Gastrocnemius medialis (tissue), 4 donors: ENCODE measurements at regions of chr16 and their contacts with region 1.

Region 1: GRCh38 chr16:56931892-56932720 is at the start of gene HERPUD1:
- DNase-seq: peak; percentile 98 to 99
- ATAC-seq: peak; percentile 77 to 83
- H3K4me3 ChIP-seq: peak within 1 kb of the TSS; percentile 84 to 99 (median 93)
- H3K27ac ChIP-seq: peak within 1 kb of the TSS; percentile 96 to 100 (median 98)
- H3K4me1 ChIP-seq: peaks cover 30 to 38% of the 10 kb centered on the region in 2 donors
- H3K27me3 ChIP-seq: no peaks in the 10 kb centered on the region
- CTCF ChIP-seq: peak in 2 of 5 experiments; percentile 10 to 25
- POLR2A ChIP-seq: peak; percentile 95 to 100
- total RNA-seq, gene HERPUD1: 110 to 281 (median 125) TPM

Region 2: GRCh38 chr16:56519459-56520250 is 412.5 kb before region 1 on chr16 and contains the start of gene BBS2:
- in situ Hi-C with region 1: no loop called
- intact Hi-C with region 1: loop called (anchors 10 kb)
- DNase-seq: peak; percentile 79 to 85
- ATAC-seq: peak; percentile 88 to 90
- H3K4me3 ChIP-seq: peak within 1 kb of the TSS; percentile 90 to 99 (median 96)
- H3K27ac ChIP-seq: peak within 1 kb of the TSS; percentile 90 to 92 (median 91)
- H3K4me1 ChIP-seq: peaks cover 33 to 41% of the 10 kb centered on the region in 2 donors
- H3K27me3 ChIP-seq: no peaks in the 10 kb centered on the region
- CTCF ChIP-seq: peak in 1 of 5 experiments; percentile 12
- POLR2A ChIP-seq: peak; percentile 82 to 85
- total RNA-seq, gene BBS2: 25.2 to 52.0 (median 28.6) TPM

Region 3: DNA sequence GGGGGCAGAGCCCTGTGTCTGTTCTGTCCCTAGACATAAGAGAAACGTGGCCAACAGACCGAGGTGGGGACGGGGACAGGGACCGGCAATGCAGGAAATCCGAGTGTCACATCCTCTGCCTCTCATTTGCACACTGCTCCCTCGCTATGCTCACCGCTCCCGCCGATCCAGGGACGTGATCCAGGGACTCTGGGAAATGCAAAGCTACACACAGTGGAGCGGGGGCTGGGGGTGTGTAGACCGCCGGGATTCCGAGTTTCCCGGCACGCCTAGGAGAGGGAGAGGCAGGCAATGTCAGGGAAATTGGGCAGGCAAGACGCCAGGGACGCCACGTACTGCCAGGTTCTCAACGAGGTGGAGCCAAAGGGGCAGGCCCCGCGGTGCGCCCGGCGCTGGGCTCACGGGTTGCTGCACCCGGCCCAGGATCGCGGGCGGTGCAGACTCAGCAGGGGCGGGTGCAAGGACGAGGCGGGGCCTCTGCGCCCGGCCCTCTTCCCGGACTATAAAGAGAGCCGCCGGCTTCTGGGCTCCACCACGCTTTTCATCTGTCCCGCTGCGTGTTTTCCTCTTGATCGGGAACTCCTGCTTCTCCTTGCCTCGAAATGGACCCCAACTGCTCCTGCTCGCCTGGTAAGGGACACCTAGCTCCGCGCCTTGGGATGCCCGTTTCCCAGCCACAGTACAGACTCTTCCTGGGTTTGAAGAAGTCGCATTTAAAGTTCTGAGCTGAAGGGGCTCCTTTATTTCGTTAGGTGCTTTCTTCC is 250.0 kb before region 1 on chr16 and contains the start of gene MT1X:
- in situ Hi-C with region 1: no loop called
- intact Hi-C with region 1: loop called (anchors 5 kb)
- DNase-seq: peak; percentile 95 to 97
- ATAC-seq: peak; percentile 28 to 29
- H3K4me3 ChIP-seq: peak within 1 kb of the TSS; percentile 66 to 83 (median 78)
- H3K27ac ChIP-seq: peak within 1 kb of the TSS; percentile 89 to 94 (median 91)
- H3K4me1 ChIP-seq: peaks cover 45 to 46% of the 10 kb centered on the region in 2 donors
- H3K27me3 ChIP-seq: no peaks in the 10 kb centered on the region
- CTCF ChIP-seq: no peak
- POLR2A ChIP-seq: peak in 1 of 2 donors; percentile 99
- total RNA-seq, gene MT1X: 3,871 to 10,589 (median 6,239) TPM

Region 4: DNA sequence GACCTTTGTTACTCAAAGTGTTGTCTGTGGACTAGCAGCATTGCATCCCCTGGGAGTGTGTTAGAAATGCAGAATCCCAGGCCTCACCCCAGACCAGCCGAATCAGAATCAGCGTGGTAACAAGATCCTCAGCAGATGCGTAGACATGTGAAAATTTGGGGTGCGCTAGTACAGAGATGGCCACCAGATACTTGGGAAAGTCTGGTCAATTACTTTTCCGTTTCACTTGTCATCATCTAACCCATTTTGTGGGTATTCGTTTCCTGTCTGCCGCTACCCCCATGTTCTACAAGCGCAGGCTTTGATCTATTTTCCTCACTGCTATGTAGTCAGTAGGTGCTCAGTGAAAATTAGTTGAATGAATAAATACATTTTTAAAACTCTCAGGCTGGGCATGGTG is 33.3 kb before region 1 on chr16:
- in situ Hi-C with region 1: no loop called
- intact Hi-C with region 1: no loop called
- DNase-seq: no peak
- ATAC-seq: no peak
- H3K4me3 ChIP-seq: no peak overlapping the region
- H3K27ac ChIP-seq: no peak overlapping the region
- H3K4me1 ChIP-seq: no peaks in the 10 kb centered on the region
- H3K27me3 ChIP-seq: no peaks in the 10 kb centered on the region
- CTCF ChIP-seq: no peak
- POLR2A ChIP-seq: no peak

Region 5: DNA sequence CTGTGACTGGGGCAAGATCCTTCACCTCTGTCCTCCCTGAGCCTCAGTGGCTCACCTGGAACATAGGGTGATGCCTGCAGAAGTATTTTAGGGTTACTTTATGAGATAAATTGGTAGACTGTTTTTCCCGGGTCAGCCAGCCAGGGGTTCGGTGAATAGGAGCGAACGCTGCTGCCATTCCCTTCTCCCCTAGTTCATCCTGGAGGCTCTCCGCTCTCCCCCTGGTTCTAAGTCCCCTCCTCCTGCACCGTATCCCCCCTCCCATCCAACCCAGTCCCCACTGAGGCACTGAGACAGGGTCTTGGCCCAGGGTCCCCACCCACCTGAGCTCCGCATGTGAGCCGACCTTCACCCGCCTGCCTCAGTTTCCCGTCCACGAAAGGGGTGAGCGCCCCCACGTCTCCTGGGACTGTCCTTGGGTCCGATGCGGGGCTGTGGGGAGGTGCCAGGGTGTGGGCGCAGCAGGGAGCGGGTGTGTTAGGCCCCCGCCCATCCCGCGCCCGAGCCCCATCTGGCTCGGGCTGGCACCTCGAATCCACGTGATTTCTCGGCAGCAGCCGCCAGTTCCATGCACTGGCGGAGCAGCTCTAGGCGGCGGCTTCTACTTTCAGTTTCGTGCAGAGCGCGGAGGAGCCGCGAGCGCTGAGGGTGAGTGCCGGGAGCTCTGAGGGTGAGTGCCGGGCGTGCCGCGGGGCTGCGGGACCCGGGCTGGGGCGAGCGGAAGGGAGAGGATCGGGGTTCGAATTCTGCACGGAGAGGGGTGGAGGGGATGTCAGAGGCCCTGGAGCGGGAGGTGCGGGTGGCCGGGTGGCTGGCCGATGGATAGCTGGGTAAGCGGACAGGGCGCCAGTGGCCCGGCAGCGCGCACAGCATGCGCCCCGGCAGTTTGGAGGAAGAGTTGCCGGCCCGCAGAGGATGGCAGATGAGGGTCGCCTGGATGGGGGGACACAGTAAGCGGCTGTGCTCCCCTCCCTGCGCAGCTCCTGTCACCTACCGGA is 57.1 kb after region 1 on chr16 and contains the start of gene NLRC5:
- in situ Hi-C with region 1: no loop called
- intact Hi-C with region 1: loop called (anchors 5 kb)
- DNase-seq: peak; percentile 48 to 71
- ATAC-seq: peak; percentile 84 to 89
- H3K4me3 ChIP-seq: peak within 1 kb of the TSS; percentile 78 to 92 (median 82)
- H3K27ac ChIP-seq: peak within 1 kb of the TSS; percentile 78 to 86 (median 81)
- H3K4me1 ChIP-seq: peaks cover 16 to 21% of the 10 kb centered on the region in 2 donors
- H3K27me3 ChIP-seq: no peaks in the 10 kb centered on the region
- CTCF ChIP-seq: no peak
- POLR2A ChIP-seq: peak; percentile 59 to 76
- total RNA-seq, gene NLRC5: 2.5 to 9.4 (median 5.1) TPM

Region 6: DNA sequence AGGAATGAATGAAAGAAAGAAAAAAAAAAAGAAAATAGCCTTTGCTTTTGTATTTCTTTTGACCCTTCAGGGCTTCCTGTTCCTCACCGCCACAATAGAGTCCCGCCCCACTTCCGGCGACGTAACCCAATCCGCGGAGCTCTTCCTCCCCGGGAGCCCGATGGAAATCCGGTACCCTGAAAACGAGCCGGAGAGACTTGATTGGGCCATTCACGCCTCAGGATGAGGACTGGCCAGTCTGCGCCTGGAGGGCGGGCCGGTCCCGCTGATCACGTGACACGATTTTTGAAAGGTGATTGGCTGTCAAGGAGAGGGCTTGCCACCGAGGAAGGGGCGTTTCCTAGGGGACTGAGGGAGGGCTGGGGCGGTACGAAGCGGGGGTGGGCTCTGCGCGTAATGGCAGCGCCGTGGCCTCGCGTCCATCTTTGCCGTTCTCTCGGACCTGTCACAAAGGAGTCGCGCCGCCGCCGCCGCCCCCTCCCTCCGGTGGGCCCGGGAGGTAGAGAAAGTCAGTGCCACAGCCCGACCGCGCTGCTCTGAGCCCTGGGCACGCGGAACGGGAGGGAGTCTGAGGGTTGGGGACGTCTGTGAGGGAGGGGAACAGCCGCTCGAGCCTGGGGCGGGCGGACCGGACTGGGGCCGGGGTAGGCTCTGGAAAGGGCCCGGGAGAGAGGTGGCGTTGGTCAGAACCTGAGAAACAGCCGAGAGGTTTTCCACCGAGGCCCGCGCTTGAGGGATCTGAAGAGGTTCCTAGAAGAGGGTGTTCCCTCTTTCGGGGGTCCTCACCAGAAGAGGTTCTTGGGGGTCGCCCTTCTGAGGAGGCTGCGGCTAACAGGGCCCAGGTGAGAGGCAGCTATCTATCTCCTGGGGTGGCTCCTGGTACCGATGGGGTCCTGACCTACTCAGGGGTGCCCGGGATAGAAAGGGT is 254.1 kb after region 1 on chr16 and contains the starts of genes PSME3IP1 and RSPRY1:
- in situ Hi-C with region 1: no loop called
- intact Hi-C with region 1: loop called (anchors 1 kb)
- DNase-seq: peak; percentile 99
- ATAC-seq: peak; percentile 97 to 99
- H3K4me3 ChIP-seq: peak within 1 kb of the TSS; percentile 81 to 94 (median 92)
- H3K27ac ChIP-seq: peak within 1 kb of the TSS; percentile 92 to 97 (median 95)
- H3K4me1 ChIP-seq: peaks cover 32 to 40% of the 10 kb centered on the region in 2 donors
- H3K27me3 ChIP-seq: no peaks in the 10 kb centered on the region
- CTCF ChIP-seq: peak in 2 of 5 experiments; percentile 35 to 40
- POLR2A ChIP-seq: peak; percentile 84 to 85
- total RNA-seq, gene PSME3IP1: 43.8 to 57.6 (median 53.4) TPM
- total RNA-seq, gene RSPRY1: 15.4 to 24.1 (median 20.7) TPM

Region 7: DNA sequence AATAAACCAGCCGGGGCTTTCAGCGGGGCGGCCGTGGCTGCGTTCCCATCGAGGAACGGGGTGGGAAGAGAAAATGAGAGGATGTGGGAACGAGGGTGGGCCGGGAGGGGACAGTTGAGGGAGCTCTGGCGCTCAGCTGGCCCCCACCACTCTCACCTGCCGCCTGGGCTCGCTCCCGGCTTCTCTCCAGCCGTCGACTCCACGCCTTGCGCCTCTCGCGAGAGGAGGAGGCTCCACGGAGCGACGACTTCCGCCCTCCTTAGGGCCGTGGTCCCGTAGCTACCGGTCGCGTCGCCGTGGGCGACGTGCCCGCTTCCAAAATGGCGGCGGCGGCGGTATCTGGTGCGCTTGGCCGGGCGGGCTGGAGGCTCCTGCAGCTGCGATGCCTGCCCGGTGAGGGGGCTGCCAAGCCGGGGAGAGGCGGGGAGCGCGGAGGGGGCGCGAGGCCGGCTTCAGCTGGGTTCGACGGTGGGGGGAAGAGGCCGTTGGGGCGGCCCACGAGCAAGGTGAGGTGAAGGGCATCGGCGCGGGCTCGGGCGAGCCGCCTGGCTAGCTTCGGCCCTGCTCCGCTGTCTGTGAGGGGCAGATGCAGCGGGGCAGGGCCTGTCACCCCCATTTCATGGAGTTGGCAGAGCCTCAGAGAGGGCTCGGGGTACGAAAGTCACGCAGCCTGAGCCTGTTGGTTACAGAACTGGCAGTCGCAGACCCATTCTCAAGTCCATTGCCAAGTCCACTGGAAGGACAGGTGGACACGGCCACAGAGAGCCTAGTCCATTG is 515.3 kb after region 1 on chr16 and contains the starts of genes CIAPIN1 and COQ9:
- in situ Hi-C with region 1: no loop called
- intact Hi-C with region 1: loop called (anchors 2 kb)
- DNase-seq: peak; percentile 89 to 94
- ATAC-seq: peak; percentile 92 to 97
- H3K4me3 ChIP-seq: peak within 1 kb of the TSS; percentile 82 to 97 (median 95)
- H3K27ac ChIP-seq: peak within 1 kb of the TSS; percentile 98 to 99 (median 98)
- H3K4me1 ChIP-seq: peaks cover 32 to 38% of the 10 kb centered on the region in 2 donors
- H3K27me3 ChIP-seq: no peaks in the 10 kb centered on the region
- CTCF ChIP-seq: no peak
- POLR2A ChIP-seq: peak; percentile 95 to 97
- total RNA-seq, gene CIAPIN1: 31.0 to 38.8 (median 37.9) TPM
- total RNA-seq, gene COQ9: 107 to 171 (median 135) TPM